SK-N-SH (cell line): ENCODE measurements at regions of chr7 and their contacts with region 1.

Region 1: GRCh38 chr7:134605973-134606923 is 40.4 kb upstream of the BPGM start:
- DNase-seq: peak; percentile 66
- H3K4me3 ChIP-seq: peak overlapping the region in 1 of 2 experiments; percentile 16; a peak in 1 of 4 replicates
- H3K27ac ChIP-seq: no peak overlapping the region; a peak in 1 of 4 replicates
- H3K4me1 ChIP-seq: no peaks in the 10 kb centered on the region; a peak in 2 of 4 replicates
- H3K27me3 ChIP-seq: no peaks in the 10 kb centered on the region
- CTCF ChIP-seq: peak; percentile 100
- EP300 ChIP-seq: no peak
- RAD21 ChIP-seq: peak; percentile 92

Region 2: GRCh38 chr7:134520130-134520529 is 86.1 kb before region 1 on chr7:
- CTCF ChIA-PET with region 1: interaction called, 79 read pairs
- POLR2A ChIA-PET with region 1: no interaction called
- DNase-seq: no peak
- H3K4me3 ChIP-seq: no peak overlapping the region
- H3K27ac ChIP-seq: no peak overlapping the region
- H3K4me1 ChIP-seq: peaks cover 0 to 6% of the 10 kb centered on the region in 2 experiments; a peak in 1 of 4 replicates
- H3K27me3 ChIP-seq: peaks cover 15% of the 10 kb centered on the region; the same call in 1 of the 2 replicates
- CTCF ChIP-seq: peak; percentile 54
- EP300 ChIP-seq: no peak
- RAD21 ChIP-seq: peak; percentile 31; the same call in 1 of the 2 replicates

Region 3: DNA sequence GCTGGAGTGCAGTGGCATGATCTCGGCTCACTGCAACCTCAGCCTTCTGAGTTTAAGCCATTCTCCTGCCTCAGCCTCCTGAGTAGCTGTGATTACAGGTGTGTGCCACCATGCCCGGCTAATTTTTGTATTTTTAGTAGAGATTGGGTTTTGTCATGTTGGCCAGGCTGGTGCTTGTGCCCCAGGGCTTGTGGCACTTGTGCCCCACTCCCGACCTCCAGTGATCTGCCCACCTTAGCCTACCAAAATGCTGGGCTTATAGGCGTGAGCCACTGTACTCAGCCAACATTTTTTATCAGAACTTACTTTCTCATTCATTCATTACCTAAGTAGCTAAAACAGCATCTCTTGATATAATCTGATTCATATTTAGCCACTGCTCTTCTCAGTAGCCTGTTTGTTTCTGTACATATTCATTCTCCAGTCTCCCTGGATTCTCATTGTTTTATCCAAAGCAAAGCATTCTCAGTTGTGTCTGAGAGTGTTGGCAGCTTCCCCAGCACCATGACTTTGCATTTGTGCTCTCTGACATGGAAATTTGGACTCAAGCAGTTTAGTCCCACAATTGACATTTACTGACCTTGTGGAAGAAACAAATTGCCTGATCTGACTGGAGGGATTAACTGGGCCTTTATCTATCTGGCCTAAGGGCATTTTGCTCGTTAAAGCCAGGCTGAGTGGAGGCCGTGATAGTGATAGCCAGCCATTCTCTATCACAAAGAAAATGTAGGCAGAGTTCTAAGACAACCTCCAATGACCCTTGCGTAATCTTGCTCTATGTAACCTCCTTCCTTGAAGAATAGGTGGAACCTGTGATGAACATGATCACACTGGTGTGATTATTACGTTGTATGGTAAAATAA is 12.5 kb before region 1 on chr7:
- CTCF ChIA-PET with region 1: interaction called, 45 read pairs
- POLR2A ChIA-PET with region 1: no interaction called
- DNase-seq: peak; percentile 10
- H3K4me3 ChIP-seq: no peak overlapping the region
- H3K27ac ChIP-seq: peak overlapping the region; percentile 36 to 80
- H3K4me1 ChIP-seq: peaks cover 0 to 4% of the 10 kb centered on the region in 2 experiments; a peak in 2 of 4 replicates
- H3K27me3 ChIP-seq: no peaks in the 10 kb centered on the region
- CTCF ChIP-seq: no peak
- EP300 ChIP-seq: peak in 1 of 2 experiments; percentile 10; a peak in 1 of 4 replicates
- RAD21 ChIP-seq: no peak

Region 4: GRCh38 chr7:134619627-134620331 is 13.5 kb after region 1 on chr7:
- CTCF ChIA-PET with region 1: interaction called, 43 read pairs
- POLR2A ChIA-PET with region 1: no interaction called
- DNase-seq: no peak
- H3K4me3 ChIP-seq: no peak overlapping the region
- H3K27ac ChIP-seq: peak overlapping the region in 1 of 2 experiments; percentile 99; a peak in 2 of 4 replicates
- H3K4me1 ChIP-seq: peaks cover 0 to 27% of the 10 kb centered on the region in 2 experiments; a peak in 1 of 4 replicates
- H3K27me3 ChIP-seq: no peaks in the 10 kb centered on the region
- CTCF ChIP-seq: no peak
- EP300 ChIP-seq: peak in 1 of 2 experiments; percentile 48; a peak in 1 of 4 replicates
- RAD21 ChIP-seq: no peak

Region 5: GRCh38 chr7:134625550-134625949 is 19.3 kb after region 1 on chr7:
- CTCF ChIA-PET with region 1: interaction called, 43 read pairs
- POLR2A ChIA-PET with region 1: no interaction called
- DNase-seq: no peak
- H3K4me3 ChIP-seq: no peak overlapping the region
- H3K27ac ChIP-seq: peak overlapping the region in 1 of 2 experiments; percentile 85; a peak in 2 of 4 replicates
- H3K4me1 ChIP-seq: peaks cover 0 to 4% of the 10 kb centered on the region in 2 experiments; a peak in 1 of 4 replicates
- H3K27me3 ChIP-seq: no peaks in the 10 kb centered on the region
- CTCF ChIP-seq: no peak
- EP300 ChIP-seq: no peak
- RAD21 ChIP-seq: no peak

Region 6: DNA sequence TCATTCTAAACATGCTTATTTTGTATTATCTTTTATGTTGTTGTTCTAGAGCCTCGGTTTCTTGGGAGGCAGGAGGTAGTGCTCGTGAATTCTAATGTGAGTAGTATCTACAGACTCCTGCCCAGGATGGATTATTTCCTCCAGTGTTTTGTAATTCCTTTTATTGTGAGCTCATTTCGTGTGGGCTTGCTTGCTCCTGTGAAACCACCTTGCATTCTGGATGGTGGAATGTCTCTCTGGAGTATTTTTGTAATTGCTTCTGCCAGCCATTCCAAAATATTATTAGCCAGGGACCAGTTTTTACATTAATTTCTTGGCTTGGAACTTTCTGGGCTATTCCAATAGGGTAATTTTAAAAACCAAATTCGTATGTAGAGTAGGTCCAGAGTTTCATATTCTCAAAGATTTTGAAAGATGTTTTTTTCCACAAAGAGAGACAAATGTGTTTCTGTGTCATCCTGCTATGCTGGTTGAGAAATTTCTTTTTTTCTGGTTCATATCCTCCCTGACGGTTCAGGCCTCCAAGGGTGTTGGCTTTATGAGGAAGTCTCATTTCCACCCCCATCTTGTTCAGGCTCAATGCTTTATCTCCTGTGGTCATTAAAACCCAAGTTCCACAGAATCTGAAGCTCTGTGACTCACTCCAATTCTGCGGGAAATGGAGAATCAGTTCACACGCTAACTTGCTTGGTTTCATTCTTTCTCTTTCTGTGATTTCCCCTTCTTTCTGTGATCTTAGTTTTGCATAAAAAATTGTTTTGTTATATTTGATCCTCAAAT is 131.5 kb after region 1 on chr7:
- CTCF ChIA-PET with region 1: no interaction called
- POLR2A ChIA-PET with region 1: no interaction called
- DNase-seq: no peak
- H3K4me3 ChIP-seq: no peak overlapping the region
- H3K27ac ChIP-seq: peak overlapping the region; percentile 38 to 53; a peak in 3 of 4 replicates
- H3K4me1 ChIP-seq: peaks cover 0 to 8% of the 10 kb centered on the region in 2 experiments; a peak in 3 of 4 replicates
- H3K27me3 ChIP-seq: no peaks in the 10 kb centered on the region
- CTCF ChIP-seq: no peak
- EP300 ChIP-seq: no peak
- RAD21 ChIP-seq: no peak

Region 7: GRCh38 chr7:134875867-134876266 is 269.6 kb after region 1 on chr7:
- CTCF ChIA-PET with region 1: no interaction called
- POLR2A ChIA-PET with region 1: no interaction called
- DNase-seq: no peak
- H3K4me3 ChIP-seq: no peak overlapping the region
- H3K27ac ChIP-seq: peak overlapping the region; percentile 17 to 78; a peak in 3 of 4 replicates
- H3K4me1 ChIP-seq: peaks cover 0 to 37% of the 10 kb centered on the region in 2 experiments; a peak in 3 of 4 replicates
- H3K27me3 ChIP-seq: no peaks in the 10 kb centered on the region
- CTCF ChIP-seq: no peak
- EP300 ChIP-seq: peak in 1 of 2 experiments; percentile 70; a peak in 2 of 4 replicates
- RAD21 ChIP-seq: no peak

Region 8: DNA sequence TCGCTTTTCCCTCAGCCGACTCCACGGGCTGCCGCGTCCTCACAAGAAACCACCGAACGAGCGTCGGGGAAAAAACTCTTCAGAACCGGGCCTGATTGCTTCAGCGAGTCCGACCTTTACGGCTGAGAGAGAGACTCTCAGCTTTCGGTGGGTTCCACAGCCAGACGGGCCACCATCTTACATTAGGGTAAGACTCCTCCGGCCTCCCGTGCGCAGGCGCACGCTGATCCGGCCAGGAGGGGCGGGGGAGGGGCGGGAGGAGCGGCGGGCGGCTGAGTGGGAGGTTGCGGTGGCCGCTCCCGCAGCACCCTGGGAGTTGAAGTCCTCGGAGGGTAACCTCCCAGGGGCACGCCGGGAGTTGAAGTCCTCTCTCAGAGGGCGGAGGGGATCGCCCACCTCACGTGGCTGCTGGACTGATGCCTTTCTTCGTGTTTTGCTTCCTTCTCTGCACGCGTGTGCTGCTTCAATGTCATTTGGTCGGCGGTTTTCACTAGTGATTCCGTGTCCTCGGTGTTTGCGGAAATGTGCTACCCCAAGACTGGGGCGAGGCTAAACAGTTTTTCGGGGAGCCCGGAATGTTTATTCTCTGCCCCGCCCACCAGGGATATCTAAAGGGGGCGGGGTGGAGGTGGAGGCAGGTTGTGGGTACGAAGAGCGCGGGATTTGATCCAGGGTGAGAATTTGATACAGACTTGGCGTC is 903.8 kb after region 1 on chr7 and contains the start of gene CNOT4:
- CTCF ChIA-PET with region 1: no interaction called
- POLR2A ChIA-PET with region 1: no interaction called
- DNase-seq: peak; percentile 98
- H3K4me3 ChIP-seq: peak within 1 kb of the TSS; percentile 58 to 87
- H3K27ac ChIP-seq: peak within 1 kb of the TSS; percentile 90 to 92
- H3K4me1 ChIP-seq: peaks cover 9 to 17% of the 10 kb centered on the region in 2 experiments; a peak in 3 of 4 replicates
- H3K27me3 ChIP-seq: no peaks in the 10 kb centered on the region
- CTCF ChIP-seq: no peak
- EP300 ChIP-seq: no peak
- RAD21 ChIP-seq: no peak
- polyA plus RNA-seq, gene CNOT4: 8.0 and 9.3 TPM in 2 replicates